Calu3 (cell line): ENCODE measurements at regions of chr3 and their contacts with region 1.

Region 1: DNA sequence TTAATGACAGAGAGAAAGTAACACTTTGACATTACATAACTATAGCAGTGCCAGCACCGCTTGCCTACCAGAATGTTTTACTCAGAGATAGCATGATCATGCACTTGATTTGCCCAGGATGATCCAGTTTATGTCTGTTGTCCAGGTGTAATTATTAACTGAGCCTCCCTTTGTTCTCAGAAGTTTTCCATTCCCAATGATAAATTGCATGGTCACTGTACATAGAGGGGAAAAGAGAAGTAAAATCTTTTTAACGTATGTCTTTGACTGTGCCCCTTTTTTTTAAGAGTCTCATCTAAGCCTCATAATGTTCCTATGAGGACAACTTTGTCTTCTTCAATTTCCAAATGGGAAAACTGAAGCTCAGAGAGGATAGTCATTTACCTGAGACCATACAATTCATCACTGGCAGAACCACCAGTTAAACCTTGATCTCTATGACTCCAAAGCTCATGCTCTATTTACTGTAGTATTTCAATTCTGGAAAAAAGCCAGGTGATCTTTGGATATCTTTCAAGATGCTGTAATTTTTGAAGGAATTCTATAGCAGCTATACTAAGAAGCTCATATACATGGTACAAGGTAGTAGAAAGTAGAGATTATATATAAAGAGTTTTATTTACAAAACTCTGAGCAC is 25.1 kb downstream of the C3orf85 start:
- DNase-seq: no peak
- H3K4me3 Mint-ChIP-seq: no peak overlapping the region
- H3K27ac Mint-ChIP-seq: no peak overlapping the region
- H3K4me1 Mint-ChIP-seq: peaks cover 1% of the 10 kb centered on the region
- H3K27me3 Mint-ChIP-seq: no peaks in the 10 kb centered on the region
- CTCF ChIP-seq: no peak

Region 2: DNA sequence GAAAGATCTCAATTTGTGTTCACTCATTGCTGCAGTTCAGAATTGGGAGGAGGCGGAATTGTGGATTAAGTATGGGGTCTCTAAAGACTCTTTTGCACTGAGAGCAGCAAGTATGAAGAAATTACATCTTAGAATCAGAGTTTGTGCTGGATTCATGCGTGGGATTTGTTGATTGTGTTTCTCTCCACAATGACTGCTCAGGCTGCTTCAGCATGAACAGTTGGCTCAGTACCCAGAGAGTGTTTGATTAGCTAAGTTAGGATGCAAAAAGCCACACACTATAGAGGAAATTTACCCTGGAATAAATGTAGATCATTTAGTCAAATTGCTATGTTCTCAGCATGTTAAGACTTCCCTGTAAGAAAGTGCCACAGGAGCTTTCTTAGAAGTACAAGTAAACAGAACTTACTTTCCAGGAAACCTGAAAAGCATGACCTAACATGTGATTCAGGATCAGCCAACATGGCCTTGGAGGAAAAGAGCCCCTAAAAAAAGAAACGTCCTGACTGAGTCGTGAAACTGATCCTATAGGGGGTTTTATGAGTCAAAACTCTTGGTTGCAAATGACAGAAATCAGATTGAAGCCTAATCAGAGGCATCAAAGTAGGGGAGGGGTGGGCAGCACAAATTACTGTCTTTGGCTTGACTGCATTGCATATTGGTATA is 832.7 kb before region 1 on chr3:
- CTCF ChIA-PET with region 1: no interaction called
- intact Hi-C with region 1: no loop called
- DNase-seq: no peak
- H3K4me3 Mint-ChIP-seq: no peak overlapping the region
- H3K27ac Mint-ChIP-seq: no peak overlapping the region
- H3K4me1 Mint-ChIP-seq: no peaks in the 10 kb centered on the region
- H3K27me3 Mint-ChIP-seq: no peaks in the 10 kb centered on the region
- CTCF ChIP-seq: no peak

Region 3: GRCh38 chr3:108835101-108835500 is 326.5 kb before region 1 on chr3:
- CTCF ChIA-PET with region 1: no interaction called
- intact Hi-C with region 1: no loop called
- DNase-seq: no peak
- H3K4me3 Mint-ChIP-seq: no peak overlapping the region
- H3K27ac Mint-ChIP-seq: no peak overlapping the region
- H3K4me1 Mint-ChIP-seq: no peaks in the 10 kb centered on the region
- H3K27me3 Mint-ChIP-seq: peaks cover 12% of the 10 kb centered on the region
- CTCF ChIP-seq: no peak

Region 4: DNA sequence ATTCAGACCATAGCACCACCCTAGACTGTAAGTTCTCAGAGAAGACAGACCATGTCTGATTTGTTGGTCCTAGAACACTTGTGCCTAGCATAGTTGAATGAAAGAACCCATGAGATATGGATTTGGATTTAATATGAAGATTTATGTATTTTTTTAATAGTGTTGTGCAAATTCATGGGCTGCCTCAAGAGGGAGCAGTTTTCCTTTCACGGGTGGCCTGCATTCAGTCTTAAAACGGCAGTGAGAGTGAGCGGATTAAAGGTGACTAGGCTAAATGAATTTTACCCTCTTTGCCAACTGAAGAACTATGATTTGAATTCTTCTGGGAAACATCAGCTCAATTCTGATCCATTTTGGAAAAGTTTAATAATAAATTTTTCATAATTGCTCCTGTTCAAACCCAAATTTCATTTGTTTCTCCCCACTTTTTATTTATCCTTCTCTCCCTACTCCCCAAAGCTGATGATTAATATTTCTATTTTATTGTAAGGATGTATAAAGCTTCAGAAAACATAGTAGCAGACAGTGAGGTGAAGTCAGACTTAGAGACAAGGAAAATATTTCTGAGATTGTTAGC is 110.9 kb before region 1 on chr3:
- CTCF ChIA-PET with region 1: no interaction called
- intact Hi-C with region 1: no loop called
- DNase-seq: peak; percentile 41
- H3K4me3 Mint-ChIP-seq: no peak overlapping the region
- H3K27ac Mint-ChIP-seq: no peak overlapping the region
- H3K4me1 Mint-ChIP-seq: peaks cover 7% of the 10 kb centered on the region
- H3K27me3 Mint-ChIP-seq: no peaks in the 10 kb centered on the region
- CTCF ChIP-seq: peak; percentile 51

Region 5: DNA sequence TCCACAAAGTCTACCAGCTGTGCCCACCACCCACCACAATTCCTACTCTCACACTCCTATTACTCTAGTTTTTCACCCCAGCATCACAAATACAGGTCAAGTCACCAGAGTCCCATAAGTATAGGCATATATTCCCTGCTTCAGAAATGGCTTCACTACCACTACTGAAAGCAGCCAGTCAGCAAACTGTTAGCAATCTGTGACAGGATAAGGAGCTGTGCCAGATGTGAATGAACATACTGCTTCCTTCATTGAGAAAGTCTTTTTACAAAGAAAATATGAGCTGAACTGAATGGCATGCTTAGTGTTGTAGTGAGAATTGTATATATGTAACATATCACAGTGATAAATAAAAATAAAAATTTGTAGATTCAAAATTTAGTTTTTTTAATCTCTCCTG is 51.7 kb after region 1 on chr3:
- CTCF ChIA-PET with region 1: no interaction called
- intact Hi-C with region 1: loop called (anchors 10 kb)
- DNase-seq: no peak
- H3K4me3 Mint-ChIP-seq: no peak overlapping the region
- H3K27ac Mint-ChIP-seq: no peak overlapping the region
- H3K4me1 Mint-ChIP-seq: no peaks in the 10 kb centered on the region
- H3K27me3 Mint-ChIP-seq: peaks cover 3% of the 10 kb centered on the region
- CTCF ChIP-seq: no peak